ENCODE measurements at regions of chr12 and their contacts with region 1.

Region 1: GRCh38 chr12:100741084-100741711 is 53.4 kb upstream of the ANO4 start:
- DNase-seq: no peak
- ATAC-seq: peak; percentile 51; the same call in 1 of the 3 replicates
- H3K4me3 ChIP-seq: no peak overlapping the region
- H3K27ac ChIP-seq: no peak overlapping the region
- H3K4me1 ChIP-seq: no peaks in the 10 kb centered on the region
- H3K27me3 ChIP-seq: no peaks in the 10 kb centered on the region; a peak in 1 of 4 replicates
- CTCF ChIP-seq: peak; percentile 60 to 67 (median 65)
- EP300 ChIP-seq: no peak
- POLR2A ChIP-seq: no peak
- RAD21 ChIP-seq: peak; percentile 64

Region 2: GRCh38 chr12:100234598-100235304 is 506.4 kb before region 1 on chr12:
- CTCF ChIA-PET with region 1: interaction called, 5 read pairs
- POLR2A ChIA-PET with region 1: no interaction called
- RAD21 ChIA-PET with region 1: interaction called, 6 read pairs
- SMC1A ChIA-PET with region 1: interaction called, 4 read pairs
- in situ Hi-C with region 1: no loop called
- intact Hi-C with region 1: loop called (anchors 2 kb)
- DNase-seq: peak; percentile 1
- ATAC-seq: peak; percentile 70
- H3K4me3 ChIP-seq: no peak overlapping the region
- H3K27ac ChIP-seq: no peak overlapping the region
- H3K4me1 ChIP-seq: no peaks in the 10 kb centered on the region
- H3K27me3 ChIP-seq: no peaks in the 10 kb centered on the region
- CTCF ChIP-seq: peak; percentile 71 to 84 (median 75)
- EP300 ChIP-seq: no peak
- POLR2A ChIP-seq: no peak
- RAD21 ChIP-seq: peak; percentile 88

Region 3: GRCh38 chr12:100348657-100349454 is 392.3 kb before region 1 on chr12:
- CTCF ChIA-PET with region 1: no interaction called
- POLR2A ChIA-PET with region 1: no interaction called
- RAD21 ChIA-PET with region 1: no interaction called
- SMC1A ChIA-PET with region 1: interaction called, 6 read pairs
- in situ Hi-C with region 1: no loop called
- intact Hi-C with region 1: loop called (anchors 2 kb)
- DNase-seq: no peak
- ATAC-seq: peak; percentile 58; the same call in 2 of the 3 replicates
- H3K4me3 ChIP-seq: no peak overlapping the region
- H3K27ac ChIP-seq: no peak overlapping the region
- H3K4me1 ChIP-seq: no peaks in the 10 kb centered on the region
- H3K27me3 ChIP-seq: no peaks in the 10 kb centered on the region
- CTCF ChIP-seq: peak in 2 of 3 experiments; percentile 8 to 48; a peak in 2 of 6 replicates
- EP300 ChIP-seq: no peak
- POLR2A ChIP-seq: no peak
- RAD21 ChIP-seq: peak; percentile 59

Region 4: DNA sequence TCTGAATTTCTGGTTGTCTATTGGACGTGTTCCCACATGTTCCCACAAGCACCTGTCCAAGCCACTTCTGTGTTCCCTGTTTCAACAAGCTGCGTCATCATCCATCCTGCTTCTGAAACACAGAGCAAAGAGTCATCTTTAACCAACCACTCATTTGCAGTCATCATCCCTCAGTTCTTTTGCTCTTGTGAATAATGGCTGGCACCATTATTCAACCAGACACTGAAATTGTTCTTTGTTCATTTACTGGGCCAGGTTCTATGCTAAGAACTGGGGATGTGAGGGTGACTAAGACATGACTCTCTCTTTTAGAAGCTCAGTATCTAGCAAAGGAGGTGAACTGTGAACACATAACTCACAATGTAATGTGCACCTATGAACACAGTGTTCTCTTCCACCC is 12.6 kb after region 1 on chr12:
- CTCF ChIA-PET with region 1: interaction called, 12 read pairs
- POLR2A ChIA-PET with region 1: no interaction called
- RAD21 ChIA-PET with region 1: no interaction called
- SMC1A ChIA-PET with region 1: interaction called, 4 read pairs
- in situ Hi-C with region 1: no loop called
- intact Hi-C with region 1: no loop called
- DNase-seq: no peak
- ATAC-seq: no peak
- H3K4me3 ChIP-seq: no peak overlapping the region
- H3K27ac ChIP-seq: no peak overlapping the region
- H3K4me1 ChIP-seq: no peaks in the 10 kb centered on the region
- H3K27me3 ChIP-seq: no peaks in the 10 kb centered on the region
- CTCF ChIP-seq: no peak
- EP300 ChIP-seq: no peak
- POLR2A ChIP-seq: no peak
- RAD21 ChIP-seq: no peak

Region 5: DNA sequence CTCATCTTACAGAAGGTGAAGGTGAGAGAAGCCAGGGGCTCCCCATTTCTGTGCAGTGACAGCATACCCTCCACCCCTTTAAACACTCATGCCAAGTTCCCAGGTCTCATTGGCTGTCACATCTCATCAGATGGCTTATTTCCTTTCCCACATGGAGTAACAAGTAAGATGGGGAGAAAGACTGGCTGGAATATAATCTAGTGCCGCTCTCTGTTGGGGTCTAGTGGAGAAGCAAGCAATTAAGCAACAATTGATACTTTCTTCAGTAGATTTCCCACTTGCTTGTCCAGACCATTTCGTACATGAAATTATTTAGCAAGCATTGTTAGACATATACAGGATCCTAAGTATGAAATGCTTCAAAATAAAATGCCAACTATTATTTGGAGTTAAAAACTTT is 376.6 kb after region 1 on chr12:
- CTCF ChIA-PET with region 1: no interaction called
- POLR2A ChIA-PET with region 1: no interaction called
- RAD21 ChIA-PET with region 1: no interaction called
- SMC1A ChIA-PET with region 1: no interaction called
- in situ Hi-C with region 1: no loop called
- intact Hi-C with region 1: no loop called
- DNase-seq: no peak
- ATAC-seq: no peak
- H3K4me3 ChIP-seq: no peak overlapping the region
- H3K27ac ChIP-seq: no peak overlapping the region
- H3K4me1 ChIP-seq: no peaks in the 10 kb centered on the region
- H3K27me3 ChIP-seq: no peaks in the 10 kb centered on the region
- CTCF ChIP-seq: no peak
- EP300 ChIP-seq: no peak
- POLR2A ChIP-seq: no peak
- RAD21 ChIP-seq: no peak